ENCODE measurements at regions of chr16 and their contacts with region 1.

Region 1: DNA sequence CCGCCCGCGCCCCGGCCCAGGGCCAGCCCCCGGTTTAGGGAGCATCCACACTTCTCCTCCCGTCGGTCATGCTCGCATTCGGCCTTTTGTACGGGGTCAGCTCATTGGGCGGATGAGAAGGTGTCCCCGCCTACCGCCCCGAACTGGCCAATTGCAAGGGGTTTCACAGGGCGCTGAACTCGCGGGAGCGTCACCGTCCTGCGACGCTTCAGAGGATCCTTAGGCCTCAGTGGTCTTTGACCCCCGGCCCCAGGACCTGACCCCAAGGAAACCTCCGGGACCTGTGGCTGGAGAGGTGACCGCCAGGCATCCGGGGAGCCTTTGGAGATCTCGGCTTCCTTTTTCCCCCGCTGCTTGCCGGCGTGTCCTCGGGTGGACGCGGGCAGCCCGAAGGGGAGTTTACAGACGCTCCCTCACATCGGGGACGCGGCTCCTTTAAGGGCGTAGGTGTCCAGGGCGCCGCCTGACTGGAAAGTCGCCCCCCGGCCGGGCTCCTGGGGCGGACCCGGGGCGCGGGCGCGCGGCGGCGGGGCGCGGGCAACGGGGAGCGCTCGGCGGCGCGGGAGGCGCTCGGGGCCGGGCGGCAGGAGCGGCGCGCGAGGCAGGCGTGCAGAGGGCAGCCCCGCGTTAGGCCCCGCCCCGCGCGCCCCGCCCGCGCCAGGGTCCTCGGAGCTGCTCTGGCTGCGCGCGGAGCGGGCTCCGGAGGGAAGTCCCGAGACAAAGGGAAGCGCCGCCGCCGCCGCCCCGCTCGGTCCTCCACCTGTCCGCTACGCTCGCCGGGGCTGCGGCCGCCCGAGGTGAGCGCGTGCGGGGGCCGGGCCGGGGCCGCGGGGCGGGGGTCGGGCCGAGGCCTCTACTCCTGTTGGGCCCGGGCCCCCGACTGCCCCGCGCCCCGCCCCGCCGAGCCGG is at the start of gene UBE2I:
- DNase-seq: peak; percentile 98
- H3K4me3 ChIP-seq: peak within 1 kb of the TSS; percentile 72 to 84 (median 76)
- H3K27ac ChIP-seq: peak within 1 kb of the TSS; percentile 88 to 95 (median 94)
- H3K4me1 ChIP-seq: peaks cover 0 to 40% (median 39%) of the 10 kb centered on the region in 4 donors
- H3K27me3 ChIP-seq: peaks cover 0 to 1% (median 0%) of the 10 kb centered on the region in 3 donors
- CTCF ChIP-seq: no peak
- EP300 ChIP-seq: no peak
- POLR2A ChIP-seq: no peak
- total RNA-seq, gene UBE2I: 44.0 to 95.3 (median 61.5) TPM

Region 2: DNA sequence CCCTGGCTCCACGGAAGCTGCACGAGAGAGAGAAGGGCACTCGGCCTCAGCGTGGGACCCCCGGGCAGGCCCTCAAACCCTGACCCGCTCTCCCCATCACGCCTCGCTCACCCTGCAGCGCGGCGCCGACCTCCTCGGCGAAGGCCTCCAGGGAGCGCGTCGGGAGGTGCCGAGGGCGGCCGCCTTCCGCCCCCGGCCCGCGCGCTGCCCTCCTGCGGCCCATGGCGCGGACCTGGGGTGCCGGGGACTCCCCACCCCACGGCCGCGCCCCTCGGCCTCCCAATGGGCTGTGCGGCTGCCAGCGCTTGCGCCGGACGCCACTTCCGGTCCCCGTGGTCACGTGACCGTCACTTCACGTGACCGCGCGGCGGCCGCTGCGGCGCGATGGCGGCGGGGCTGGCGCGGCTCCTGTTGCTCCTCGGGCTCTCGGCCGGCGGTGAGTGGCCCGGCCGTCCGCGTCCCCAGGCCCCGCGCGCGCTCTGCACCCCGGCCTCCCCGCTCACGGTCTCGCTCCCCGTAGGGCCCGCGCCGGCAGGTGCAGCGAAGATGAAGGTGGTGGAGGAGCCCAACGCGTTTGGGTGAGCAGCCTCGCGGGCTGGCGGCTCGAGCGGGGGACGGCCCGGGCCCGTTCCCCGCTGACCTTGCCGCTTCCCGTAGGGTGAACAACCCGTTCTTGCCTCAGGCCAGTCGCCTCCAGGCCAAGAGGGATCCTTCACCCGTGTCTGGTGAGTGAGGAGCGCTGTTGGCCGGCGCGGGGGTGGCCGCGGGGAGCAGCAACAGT is 42.5 kb after region 1 on chr16 and contains the starts of genes GNPTG and TSR3:
- intact Hi-C with region 1: loop called (anchors 5 kb)
- DNase-seq: peak; percentile 93
- H3K4me3 ChIP-seq: peak within 1 kb of the TSS; percentile 84 to 98 (median 92)
- H3K27ac ChIP-seq: peak within 1 kb of the TSS; percentile 72 to 80 (median 76)
- H3K4me1 ChIP-seq: peaks cover 0 to 39% (median 26%) of the 10 kb centered on the region in 4 donors
- H3K27me3 ChIP-seq: no peaks in the 10 kb centered on the region
- CTCF ChIP-seq: no peak
- EP300 ChIP-seq: peak in 1 of 4 donors; percentile 16
- POLR2A ChIP-seq: no peak
- total RNA-seq, gene GNPTG: 42.1 to 60.1 (median 43.7) TPM
- total RNA-seq, gene TSR3: 83.4 to 107 (median 98.3) TPM

Region 3: GRCh38 chr16:1378804-1379303 is 69.6 kb after region 1 on chr16:
- intact Hi-C with region 1: no loop called
- DNase-seq: peak; percentile 86
- H3K4me3 ChIP-seq: peak overlapping the region; percentile 22 to 62 (median 52)
- H3K27ac ChIP-seq: peak overlapping the region; percentile 69 to 80 (median 74)
- H3K4me1 ChIP-seq: peaks cover 0 to 24% (median 22%) of the 10 kb centered on the region in 4 donors
- H3K27me3 ChIP-seq: no peaks in the 10 kb centered on the region
- CTCF ChIP-seq: no peak
- EP300 ChIP-seq: peak in 3 of 4 donors; percentile 7 to 73 (median 53)
- POLR2A ChIP-seq: no peak

Region 4: GRCh38 chr16:1408171-1408837 is 99.1 kb after region 1 on chr16:
- intact Hi-C with region 1: loop called (anchors 2 kb)
- DNase-seq: peak; percentile 97
- H3K4me3 ChIP-seq: peak overlapping the region in 3 of 4 donors; percentile 34 to 49 (median 43)
- H3K27ac ChIP-seq: peak overlapping the region; percentile 23 to 68 (median 60)
- H3K4me1 ChIP-seq: peaks cover 0 to 37% (median 33%) of the 10 kb centered on the region in 4 donors
- H3K27me3 ChIP-seq: no peaks in the 10 kb centered on the region
- CTCF ChIP-seq: no peak
- EP300 ChIP-seq: no peak
- POLR2A ChIP-seq: no peak

Region 5: DNA sequence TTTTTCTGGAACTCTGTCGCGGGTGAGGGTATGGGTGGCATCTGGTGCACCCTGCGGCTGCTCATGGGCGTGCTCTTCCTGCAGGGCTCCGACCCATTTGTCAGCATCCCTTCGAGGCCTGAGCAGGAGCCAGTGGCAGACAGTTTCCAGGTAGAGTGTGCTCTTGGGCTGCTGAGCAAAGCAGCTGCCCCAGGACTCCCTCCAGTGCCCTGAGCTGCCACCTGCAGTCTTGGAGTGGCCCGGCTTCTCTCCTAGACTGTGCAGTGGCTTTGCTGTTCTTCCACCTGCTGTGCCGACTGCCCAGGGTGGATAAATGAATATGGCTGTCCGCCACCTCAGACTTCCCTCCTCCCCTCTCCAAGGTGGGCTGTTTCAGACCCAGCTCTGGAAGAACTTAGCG is 358.0 kb after region 1 on chr16:
- intact Hi-C with region 1: no loop called
- DNase-seq: no peak
- H3K4me3 ChIP-seq: no peak overlapping the region
- H3K27ac ChIP-seq: no peak overlapping the region
- H3K4me1 ChIP-seq: no peaks in the 10 kb centered on the region
- H3K27me3 ChIP-seq: no peaks in the 10 kb centered on the region
- CTCF ChIP-seq: no peak
- EP300 ChIP-seq: no peak
- POLR2A ChIP-seq: no peak

Region 6: DNA sequence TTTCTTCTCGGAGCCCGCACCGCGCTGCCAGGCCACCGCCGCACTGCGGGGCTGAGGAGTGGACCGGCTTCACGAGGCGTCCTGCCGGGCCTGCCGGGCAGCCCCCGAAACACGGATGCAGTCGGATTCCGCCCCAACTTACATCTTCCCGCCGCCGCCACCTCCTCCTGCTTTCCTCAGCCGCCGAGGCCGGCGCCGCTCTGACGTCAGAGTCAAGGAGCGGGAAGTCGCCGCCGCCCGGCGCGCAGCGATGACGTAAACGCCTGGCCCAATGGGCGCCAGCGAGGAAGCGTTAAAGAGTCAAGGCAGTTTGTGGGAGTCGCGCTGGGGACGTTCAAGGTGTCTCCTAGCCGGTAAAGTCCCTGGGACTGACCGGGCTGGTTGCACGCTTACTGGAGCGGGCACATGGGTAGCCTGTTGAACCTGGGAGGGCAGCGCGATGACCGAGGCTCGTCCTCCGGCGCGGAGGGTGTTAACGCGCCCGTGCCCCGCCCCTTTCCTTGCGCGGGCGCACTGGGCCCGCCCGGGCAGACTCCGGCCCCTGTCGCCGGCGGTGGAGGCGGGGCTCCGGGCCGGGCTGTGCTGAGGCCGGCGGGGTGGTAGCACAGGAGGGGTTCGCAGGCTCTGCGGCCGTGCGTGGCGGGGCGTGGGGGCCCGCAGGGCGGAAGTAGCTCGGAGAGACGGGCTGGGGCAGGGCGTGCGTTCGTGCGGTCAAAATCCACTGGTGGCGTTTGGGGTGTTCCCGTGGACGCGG is 958.9 kb after region 1 on chr16 and contains the start of gene RNPS1:
- intact Hi-C with region 1: loop called (anchors 5 kb)
- DNase-seq: peak; percentile 98
- H3K4me3 ChIP-seq: peak within 1 kb of the TSS; percentile 70 to 90 (median 78)
- H3K27ac ChIP-seq: peak within 1 kb of the TSS; percentile 87 to 98 (median 96)
- H3K4me1 ChIP-seq: peaks cover 0 to 52% (median 35%) of the 10 kb centered on the region in 4 donors
- H3K27me3 ChIP-seq: no peaks in the 10 kb centered on the region
- CTCF ChIP-seq: no peak
- EP300 ChIP-seq: peak in 2 of 4 donors; percentile 33 to 43
- POLR2A ChIP-seq: peak; percentile 98 to 99
- total RNA-seq, gene RNPS1: 110 to 145 (median 128) TPM